ENCODE measurements at regions of chr9 and their contacts with region 1.

Region 1: DNA sequence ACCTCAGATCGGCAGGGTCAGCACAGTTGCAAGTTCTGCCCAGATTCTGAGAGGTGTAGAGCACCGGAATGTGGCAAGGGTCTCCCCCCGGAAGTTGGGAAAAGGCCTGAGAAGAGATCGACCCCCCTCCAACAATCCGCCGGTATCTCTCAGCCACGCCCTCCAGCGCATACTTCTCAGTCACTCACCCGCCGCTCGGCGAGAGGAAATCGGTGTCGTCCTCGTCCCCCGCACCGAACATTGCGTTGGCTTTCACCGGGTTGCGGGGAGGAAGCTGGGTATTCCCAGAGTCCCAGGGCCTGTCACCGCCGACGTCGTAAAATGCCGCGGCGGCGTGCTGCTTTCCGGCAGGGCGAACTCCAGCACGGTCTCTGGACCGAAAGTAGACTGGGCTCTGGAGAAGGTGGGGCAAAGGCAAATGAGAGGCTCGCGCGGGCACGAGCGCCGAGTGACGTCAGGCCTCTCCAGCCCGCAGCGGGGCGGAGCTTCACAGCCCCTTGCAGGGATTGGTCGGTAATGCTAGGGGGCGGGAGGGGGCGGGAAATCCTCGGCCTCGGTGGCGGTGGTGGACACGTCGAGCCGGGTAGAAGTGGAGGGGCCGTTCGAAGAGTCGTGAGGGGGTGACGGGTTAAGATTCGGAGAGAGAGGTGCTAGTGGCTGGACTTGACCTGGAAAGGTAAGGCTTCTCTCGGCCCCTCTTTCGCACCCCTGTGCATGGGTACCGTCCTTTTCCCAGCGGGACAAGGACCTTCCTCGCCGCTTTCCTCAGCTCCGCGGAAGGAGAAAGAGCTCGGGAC is at the starts of genes FKBP15 and SLC31A1:
- DNase-seq: peak; percentile 98
- H3K4me3 Mint-ChIP-seq: peak within 1 kb of the TSS; percentile 94
- H3K27ac Mint-ChIP-seq: peak within 1 kb of the TSS; percentile 92
- H3K4me1 Mint-ChIP-seq: peaks cover 34% of the 10 kb centered on the region
- H3K27me3 Mint-ChIP-seq: no peaks in the 10 kb centered on the region
- total RNA-seq, gene FKBP15: 25.8 to 27.7 TPM
- total RNA-seq, gene SLC31A1: 12.1 to 12.5 TPM

Region 2: GRCh38 chr9:113150670-113151611 is 70.3 kb before region 1 on chr9 and contains the start of gene SLC31A2:
- CTCF ChIA-PET with region 1: interaction called, 10 read pairs
- POLR2A ChIA-PET with region 1: interaction called, 19 read pairs
- intact Hi-C with region 1: loop called (anchors 2 kb)
- DNase-seq: peak; percentile 91
- H3K4me3 Mint-ChIP-seq: peak within 1 kb of the TSS; percentile 80
- H3K27ac Mint-ChIP-seq: peak within 1 kb of the TSS; percentile 64
- H3K4me1 Mint-ChIP-seq: peaks cover 27% of the 10 kb centered on the region
- H3K27me3 Mint-ChIP-seq: no peaks in the 10 kb centered on the region
- total RNA-seq, gene SLC31A2: 5.1 to 6.7 TPM

Region 3: GRCh38 chr9:113269355-113269754 is 48.2 kb after region 1 on chr9:
- CTCF ChIA-PET with region 1: interaction called, 46 read pairs
- POLR2A ChIA-PET with region 1: interaction called, 37 read pairs
- intact Hi-C with region 1: loop called (anchors 1 kb)
- DNase-seq: no peak
- H3K4me3 Mint-ChIP-seq: no peak overlapping the region
- H3K27ac Mint-ChIP-seq: peak overlapping the region; percentile 31
- H3K4me1 Mint-ChIP-seq: peaks cover 32% of the 10 kb centered on the region
- H3K27me3 Mint-ChIP-seq: no peaks in the 10 kb centered on the region

Region 4: GRCh38 chr9:113340017-113340699 is 119.0 kb after region 1 on chr9 and contains the start of gene WDR31:
- CTCF ChIA-PET with region 1: interaction called, 3 read pairs
- POLR2A ChIA-PET with region 1: interaction called, 3 read pairs
- intact Hi-C with region 1: loop called (anchors 5 kb)
- DNase-seq: peak; percentile 88
- H3K4me3 Mint-ChIP-seq: peak within 1 kb of the TSS; percentile 72
- H3K27ac Mint-ChIP-seq: no peak within 1 kb of the TSS
- H3K4me1 Mint-ChIP-seq: peaks cover 27% of the 10 kb centered on the region
- H3K27me3 Mint-ChIP-seq: no peaks in the 10 kb centered on the region
- total RNA-seq, gene WDR31: 1.6 to 2.4 TPM